ENCODE measurements at regions of chr7 and their contacts with region 1.

Region 1: DNA sequence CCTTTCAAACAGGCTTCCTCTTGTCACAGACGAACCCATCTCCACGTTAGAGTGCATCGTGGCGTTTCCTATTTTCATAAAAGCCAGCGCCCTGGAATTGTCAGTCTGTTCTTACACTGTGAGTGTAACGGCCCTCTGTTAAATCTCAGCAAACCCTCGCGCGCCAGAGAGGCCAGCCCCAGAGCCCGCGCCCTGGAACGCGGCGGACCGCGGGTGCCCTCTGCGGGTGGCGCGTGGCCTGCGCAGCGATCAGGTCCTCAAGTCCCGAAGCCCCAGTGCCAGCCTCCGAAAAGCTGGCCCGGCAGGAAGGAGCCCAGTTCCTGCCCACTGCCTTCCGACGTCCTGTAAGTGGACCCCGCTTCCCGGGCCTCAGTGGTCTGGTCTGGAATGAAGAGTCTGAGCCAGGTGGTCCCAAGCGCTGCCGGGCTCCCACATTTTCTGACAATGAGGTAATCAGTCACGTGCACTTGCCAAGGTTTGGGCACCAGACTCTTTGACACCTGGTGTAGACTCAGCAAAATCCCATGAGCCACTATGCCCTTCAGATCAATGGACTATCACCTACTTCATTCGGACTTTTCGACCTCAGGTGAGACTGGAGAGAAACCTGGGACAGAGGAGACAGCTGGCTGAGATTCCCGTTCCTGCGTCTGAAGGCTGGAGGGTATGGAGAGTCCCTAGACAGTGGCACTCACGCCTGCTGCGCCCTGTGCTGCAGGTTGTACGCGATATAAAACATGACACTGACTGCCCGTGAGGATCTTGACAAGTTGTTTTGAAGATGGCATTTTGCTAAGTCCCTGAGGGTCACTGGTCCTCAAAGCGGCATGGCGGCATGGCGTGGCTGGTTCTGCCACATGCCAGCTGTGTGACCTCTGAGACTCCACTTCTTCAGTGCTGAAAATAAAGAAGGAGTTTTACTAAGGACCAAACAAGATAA is 109.4 kb upstream of the LANCL2 start:
- DNase-seq: peak; percentile 81 to 96
- H3K4me3 ChIP-seq: peak overlapping the region; percentile 64
- H3K27ac ChIP-seq: no peak overlapping the region
- H3K4me1 ChIP-seq: peaks cover 5% of the 10 kb centered on the region
- H3K27me3 ChIP-seq: no peaks in the 10 kb centered on the region
- CTCF ChIP-seq: peak; percentile 99

Region 2: GRCh38 chr7:54758702-54759592 is 496.8 kb before region 1 on chr7 and contains the start of gene SEC61G:
- CTCF ChIA-PET with region 1: interaction called, 13 read pairs
- POLR2A ChIA-PET with region 1: interaction called, 4 read pairs
- intact Hi-C with region 1: no loop called
- DNase-seq: peak; percentile 99
- H3K4me3 ChIP-seq: peak within 1 kb of the TSS; percentile 77
- H3K27ac ChIP-seq: peak within 1 kb of the TSS; percentile 77
- H3K4me1 ChIP-seq: peaks cover 20% of the 10 kb centered on the region
- H3K27me3 ChIP-seq: no peaks in the 10 kb centered on the region
- CTCF ChIP-seq: no peak
- total RNA-seq, gene SEC61G: 203 and 261 TPM in 2 replicates

Region 3: DNA sequence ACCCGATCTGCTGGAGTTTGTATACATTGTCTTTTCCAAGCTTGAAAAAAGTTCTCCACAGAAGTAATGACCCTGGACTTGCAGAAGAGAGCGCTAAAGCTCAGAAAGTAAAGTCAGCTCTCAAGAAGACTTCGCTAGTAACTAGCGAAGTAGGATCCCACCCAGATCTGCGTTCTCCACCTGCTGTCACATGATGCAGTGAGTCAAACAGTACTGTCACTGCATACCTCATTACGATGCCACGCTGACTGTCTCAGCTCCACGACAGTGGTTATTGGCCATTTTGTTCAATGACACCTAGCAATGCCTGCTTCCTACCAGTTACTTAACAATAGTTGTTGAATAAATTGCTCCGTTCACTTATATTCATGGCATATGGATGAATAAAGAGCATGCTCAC is 467.1 kb before region 1 on chr7:
- CTCF ChIA-PET with region 1: interaction called, 28 read pairs
- POLR2A ChIA-PET with region 1: interaction called, 6 read pairs
- intact Hi-C with region 1: loop called (anchors 1 kb)
- DNase-seq: peak; percentile 79 to 99
- H3K4me3 ChIP-seq: no peak overlapping the region
- H3K27ac ChIP-seq: peak overlapping the region; percentile 27
- H3K4me1 ChIP-seq: peaks cover 29% of the 10 kb centered on the region
- H3K27me3 ChIP-seq: no peaks in the 10 kb centered on the region
- CTCF ChIP-seq: peak; percentile 95

Region 4: DNA sequence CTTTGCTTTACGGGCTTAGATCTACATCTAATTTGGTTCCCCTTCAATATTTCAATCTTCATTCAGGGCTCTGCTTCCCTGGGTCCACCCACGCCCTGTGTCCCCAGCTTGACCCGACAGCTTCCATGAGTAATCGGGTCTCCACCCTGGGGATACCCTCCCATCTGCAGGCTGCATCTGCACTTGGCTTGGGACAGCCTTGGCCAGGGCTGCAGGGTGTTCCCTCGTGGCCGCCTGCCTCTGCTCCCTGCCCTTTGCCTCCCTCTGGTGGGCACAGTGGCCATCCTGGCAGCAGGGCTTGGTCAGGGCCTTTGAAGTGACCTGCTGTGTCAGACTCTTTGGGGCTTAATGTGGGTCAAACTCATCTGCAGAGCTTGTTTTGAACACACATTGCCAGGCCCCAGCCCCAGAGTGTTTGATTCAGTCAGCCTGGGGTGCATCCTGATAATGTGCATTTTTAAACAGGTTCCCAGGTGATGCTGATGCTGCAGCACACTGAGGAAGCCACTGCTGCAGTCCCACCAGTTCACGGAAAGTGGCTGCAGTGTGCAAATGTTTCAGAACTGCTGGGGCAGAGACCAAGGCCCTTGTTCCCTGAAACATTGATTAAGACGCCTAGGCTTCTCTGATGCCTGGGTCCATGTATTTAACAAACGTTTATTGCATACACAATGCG is 416.1 kb before region 1 on chr7:
- CTCF ChIA-PET with region 1: interaction called, 7 read pairs
- POLR2A ChIA-PET with region 1: interaction called, 9 read pairs
- intact Hi-C with region 1: loop called (anchors 1 kb)
- DNase-seq: peak; percentile 91 to 95
- H3K4me3 ChIP-seq: 0 out of 2 replicates have a peak overlapping the region, but pooled peaks have one; percentile 2
- H3K27ac ChIP-seq: peak overlapping the region; percentile 51
- H3K4me1 ChIP-seq: peaks cover 48% of the 10 kb centered on the region
- H3K27me3 ChIP-seq: no peaks in the 10 kb centered on the region
- CTCF ChIP-seq: peak; percentile 100

Region 5: DNA sequence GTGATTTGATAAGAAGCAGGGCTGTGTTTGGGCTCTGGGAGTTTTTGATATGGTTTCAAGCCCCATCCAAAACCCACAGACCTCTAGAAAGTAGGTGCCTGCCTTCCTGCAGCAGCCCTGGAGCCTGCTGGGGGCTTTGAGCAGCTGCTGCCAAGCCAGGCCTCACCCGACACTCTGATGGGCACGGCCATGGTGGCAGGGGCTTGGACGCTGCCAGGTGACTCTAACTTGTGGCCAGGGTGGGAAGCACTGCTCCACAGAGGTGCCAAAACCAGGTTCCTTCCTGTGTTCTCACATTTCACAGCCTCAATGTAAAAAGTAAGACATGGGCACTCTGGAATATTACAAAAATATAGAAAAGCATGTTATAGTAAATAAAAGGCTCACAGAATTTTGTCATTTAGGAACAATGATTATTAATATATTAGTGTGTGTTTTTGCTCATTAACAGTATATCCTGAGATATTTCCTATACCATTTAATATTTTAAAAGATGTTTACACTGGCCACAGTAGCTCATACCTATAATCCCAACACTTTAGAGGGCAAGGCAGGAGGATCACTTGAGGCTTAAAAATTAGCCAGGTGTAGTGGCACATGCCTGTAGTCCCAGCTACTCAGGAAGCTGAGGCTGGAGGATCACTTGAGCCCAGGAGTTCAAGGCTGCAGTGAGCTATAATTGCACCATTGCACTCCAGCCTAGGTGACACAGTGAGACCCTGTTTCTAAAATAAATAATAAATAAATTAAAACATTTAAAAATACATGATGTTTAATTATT is 141.8 kb before region 1 on chr7:
- CTCF ChIA-PET with region 1: no interaction called
- POLR2A ChIA-PET with region 1: no interaction called
- intact Hi-C with region 1: no loop called
- DNase-seq: no peak
- H3K4me3 ChIP-seq: no peak overlapping the region
- H3K27ac ChIP-seq: peak overlapping the region; percentile 10; the same call in 1 of the 2 replicates
- H3K4me1 ChIP-seq: peaks cover 31% of the 10 kb centered on the region
- H3K27me3 ChIP-seq: no peaks in the 10 kb centered on the region
- CTCF ChIP-seq: no peak

Region 6: GRCh38 chr7:55185941-55186609 is 69.7 kb before region 1 on chr7:
- CTCF ChIA-PET with region 1: interaction called, 9 read pairs
- POLR2A ChIA-PET with region 1: no interaction called
- intact Hi-C with region 1: loop called (anchors 2 kb)
- DNase-seq: peak; percentile 97 to 99
- H3K4me3 ChIP-seq: no peak overlapping the region
- H3K27ac ChIP-seq: peak overlapping the region; percentile 51
- H3K4me1 ChIP-seq: peaks cover 27% of the 10 kb centered on the region
- H3K27me3 ChIP-seq: no peaks in the 10 kb centered on the region
- CTCF ChIP-seq: no peak

Region 7: GRCh38 chr7:55245271-55245723 is 10.5 kb before region 1 on chr7:
- CTCF ChIA-PET with region 1: interaction called, 16 read pairs
- POLR2A ChIA-PET with region 1: no interaction called
- intact Hi-C with region 1: no loop called
- DNase-seq: peak; percentile 63 to 72
- H3K4me3 ChIP-seq: no peak overlapping the region
- H3K27ac ChIP-seq: no peak overlapping the region
- H3K4me1 ChIP-seq: peaks cover 17% of the 10 kb centered on the region
- H3K27me3 ChIP-seq: no peaks in the 10 kb centered on the region
- CTCF ChIP-seq: no peak

Region 8: GRCh38 chr7:55343860-55344606 is 88.3 kb after region 1 on chr7:
- CTCF ChIA-PET with region 1: no interaction called
- POLR2A ChIA-PET with region 1: no interaction called
- intact Hi-C with region 1: no loop called
- DNase-seq: no peak
- H3K4me3 ChIP-seq: no peak overlapping the region
- H3K27ac ChIP-seq: no peak overlapping the region
- H3K4me1 ChIP-seq: peaks cover 11% of the 10 kb centered on the region
- H3K27me3 ChIP-seq: peaks cover 15% of the 10 kb centered on the region
- CTCF ChIP-seq: no peak

Measured in PC-9 (cell line).